GM12878 (cell line): ENCODE measurements at regions of chr22 and their contacts with region 1.

Region 1: DNA sequence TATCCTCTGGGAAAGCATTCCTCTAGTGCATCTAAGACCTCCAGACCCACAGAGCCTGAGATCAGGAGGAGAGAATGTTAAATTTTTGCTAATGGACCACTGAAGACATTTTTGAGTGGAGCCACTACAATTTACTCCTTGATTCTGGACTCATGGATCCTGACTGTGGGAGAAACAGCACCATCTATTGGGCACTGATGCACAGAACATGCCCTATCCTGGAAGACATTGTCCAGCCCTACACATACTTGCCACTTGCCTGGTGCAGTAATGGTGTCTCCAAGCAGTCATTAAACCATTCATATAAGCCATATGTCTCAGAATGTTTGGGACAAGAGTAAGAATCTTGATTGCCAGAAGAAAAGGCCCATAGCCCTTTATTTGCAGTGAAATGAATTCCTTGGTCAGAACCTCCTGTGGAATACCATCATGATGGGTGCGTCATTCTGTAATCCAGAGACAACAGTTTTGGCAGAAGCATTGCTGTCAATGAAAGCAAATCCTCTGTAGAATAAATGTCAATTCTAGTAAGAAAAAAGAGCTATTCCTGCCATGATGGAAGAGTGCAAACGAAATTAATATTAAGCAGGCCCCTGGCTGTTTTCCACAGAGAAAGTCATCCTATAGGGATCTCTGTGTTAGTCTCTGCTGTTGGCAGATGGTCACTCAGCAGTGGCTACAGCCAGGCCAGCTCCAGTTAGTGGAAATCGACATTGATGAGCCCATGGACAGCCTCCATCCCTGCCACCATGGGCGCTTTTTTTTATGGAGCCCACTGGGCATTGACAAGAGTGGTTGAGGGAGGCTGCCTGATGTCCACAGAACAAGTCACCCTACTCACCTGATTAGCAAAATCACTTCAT is 43.5 kb downstream of the GGTLC2 start:
- DNase-seq: no peak
- ATAC-seq: peak; percentile 82
- H3K4me3 ChIP-seq: no peak overlapping the region
- H3K27ac ChIP-seq: no peak overlapping the region
- H3K4me1 ChIP-seq: peaks cover 32% of the 10 kb centered on the region
- H3K27me3 ChIP-seq: no peaks in the 10 kb centered on the region
- CTCF ChIP-seq: peak; percentile 64 to 69 (median 65); a peak in 5 of 6 replicates
- EP300 ChIP-seq: no peak
- POLR2A ChIP-seq: no peak
- RAD21 ChIP-seq: peak; percentile 38

Region 2: DNA sequence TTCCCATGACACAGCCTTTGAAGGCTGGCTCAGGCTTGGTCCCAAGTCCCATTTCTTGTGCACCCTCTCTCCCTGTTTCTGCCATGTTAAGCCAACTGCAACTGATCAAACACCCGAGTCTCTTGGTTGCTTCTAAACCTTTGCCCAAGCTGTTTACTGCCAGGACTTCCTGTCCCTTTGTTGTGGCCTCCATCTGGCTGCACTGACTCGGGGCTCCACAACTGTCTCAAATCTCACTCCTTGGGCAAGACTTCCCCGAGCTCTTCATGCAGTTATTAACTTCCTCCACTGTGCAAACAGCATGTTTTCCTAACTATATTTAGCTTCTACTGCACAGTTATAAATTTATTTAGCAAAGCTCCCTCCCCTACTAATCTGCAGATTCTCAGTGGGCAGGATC is 439.0 kb before region 1 on chr22:
- CTCF ChIA-PET with region 1: no interaction called
- POLR2A ChIA-PET with region 1: no interaction called
- RAD21 ChIA-PET with region 1: no interaction called
- SMC1A ChIA-PET with region 1: no interaction called
- in situ Hi-C with region 1: no loop called
- intact Hi-C with region 1: no loop called
- DNase-seq: no peak
- ATAC-seq: no peak
- H3K4me3 ChIP-seq: no peak overlapping the region
- H3K27ac ChIP-seq: no peak overlapping the region
- H3K4me1 ChIP-seq: no peaks in the 10 kb centered on the region
- H3K27me3 ChIP-seq: no peaks in the 10 kb centered on the region
- CTCF ChIP-seq: no peak
- EP300 ChIP-seq: no peak
- POLR2A ChIP-seq: no peak
- RAD21 ChIP-seq: no peak

Region 3: GRCh38 chr22:22558972-22559603 is 128.8 kb before region 1 on chr22 and contains the start of gene PRAME:
- CTCF ChIA-PET with region 1: no interaction called
- POLR2A ChIA-PET with region 1: no interaction called
- RAD21 ChIA-PET with region 1: no interaction called
- SMC1A ChIA-PET with region 1: no interaction called
- in situ Hi-C with region 1: no loop called
- intact Hi-C with region 1: no loop called
- DNase-seq: peak; percentile 11
- ATAC-seq: peak; percentile 96
- H3K4me3 ChIP-seq: no peak within 1 kb of the TSS
- H3K27ac ChIP-seq: no peak within 1 kb of the TSS
- H3K4me1 ChIP-seq: no peaks in the 10 kb centered on the region
- H3K27me3 ChIP-seq: no peaks in the 10 kb centered on the region
- CTCF ChIP-seq: peak; percentile 68 to 81 (median 79)
- EP300 ChIP-seq: no peak
- POLR2A ChIP-seq: peak; percentile 20; the same call in 1 of the 2 replicates
- RAD21 ChIP-seq: no peak
- polyA plus RNA-seq, gene PRAME: 0.40 to 0.68 TPM

Region 4: GRCh38 chr22:22593964-22594656 is 93.8 kb before region 1 on chr22:
- CTCF ChIA-PET with region 1: interaction called, 31 read pairs
- POLR2A ChIA-PET with region 1: no interaction called
- RAD21 ChIA-PET with region 1: interaction called, 3 read pairs
- SMC1A ChIA-PET with region 1: interaction called, 5 read pairs
- in situ Hi-C with region 1: loop called (anchors 5 kb)
- intact Hi-C with region 1: loop called (anchors 2 kb)
- DNase-seq: no peak
- ATAC-seq: peak; percentile 91
- H3K4me3 ChIP-seq: no peak overlapping the region
- H3K27ac ChIP-seq: no peak overlapping the region
- H3K4me1 ChIP-seq: no peaks in the 10 kb centered on the region
- H3K27me3 ChIP-seq: no peaks in the 10 kb centered on the region
- CTCF ChIP-seq: peak; percentile 59 to 75 (median 65)
- EP300 ChIP-seq: no peak
- POLR2A ChIP-seq: no peak
- RAD21 ChIP-seq: peak; percentile 76

Region 5: GRCh38 chr22:22702237-22703202 is 14.7 kb after region 1 on chr22:
- CTCF ChIA-PET with region 1: interaction called, 24 read pairs
- POLR2A ChIA-PET with region 1: no interaction called
- RAD21 ChIA-PET with region 1: no interaction called
- SMC1A ChIA-PET with region 1: no interaction called
- in situ Hi-C with region 1: no loop called
- intact Hi-C with region 1: no loop called
- DNase-seq: no peak
- ATAC-seq: peak; percentile 68; the same call in 2 of the 3 replicates
- H3K4me3 ChIP-seq: no peak overlapping the region
- H3K27ac ChIP-seq: no peak overlapping the region
- H3K4me1 ChIP-seq: no peaks in the 10 kb centered on the region
- H3K27me3 ChIP-seq: no peaks in the 10 kb centered on the region
- CTCF ChIP-seq: peak; percentile 18 to 48 (median 27)
- EP300 ChIP-seq: no peak
- POLR2A ChIP-seq: no peak
- RAD21 ChIP-seq: no peak

Region 6: GRCh38 chr22:22710719-22711531 is 23.1 kb after region 1 on chr22:
- CTCF ChIA-PET with region 1: interaction called, 13 read pairs
- POLR2A ChIA-PET with region 1: no interaction called
- RAD21 ChIA-PET with region 1: interaction called, 3 read pairs
- SMC1A ChIA-PET with region 1: no interaction called
- in situ Hi-C with region 1: no loop called
- intact Hi-C with region 1: no loop called
- DNase-seq: no peak
- ATAC-seq: peak; percentile 70
- H3K4me3 ChIP-seq: no peak overlapping the region
- H3K27ac ChIP-seq: no peak overlapping the region
- H3K4me1 ChIP-seq: peaks cover 12% of the 10 kb centered on the region; the same call in 1 of the 2 replicates
- H3K27me3 ChIP-seq: no peaks in the 10 kb centered on the region
- CTCF ChIP-seq: peak; percentile 56 to 87 (median 64)
- EP300 ChIP-seq: no peak
- POLR2A ChIP-seq: no peak
- RAD21 ChIP-seq: no peak